ENCODE measurements at regions of chr12 and their contacts with region 1.

Region 1: GRCh38 chr12:109393437-109394345 is 46.0 kb downstream of the MYO1H start:
- DNase-seq: peak; percentile 17
- H3K4me3 Mint-ChIP-seq: no peak overlapping the region
- H3K27ac Mint-ChIP-seq: no peak overlapping the region
- H3K4me1 Mint-ChIP-seq: no peaks in the 10 kb centered on the region
- H3K27me3 Mint-ChIP-seq: peaks cover 2% of the 10 kb centered on the region

Region 2: GRCh38 chr12:109134186-109134917 is 259.3 kb before region 1 on chr12:
- intact Hi-C with region 1: loop called (anchors 1 kb)
- DNase-seq: no peak
- H3K4me3 Mint-ChIP-seq: no peak overlapping the region
- H3K27ac Mint-ChIP-seq: no peak overlapping the region
- H3K4me1 Mint-ChIP-seq: no peaks in the 10 kb centered on the region
- H3K27me3 Mint-ChIP-seq: peaks cover 8% of the 10 kb centered on the region

Region 3: DNA sequence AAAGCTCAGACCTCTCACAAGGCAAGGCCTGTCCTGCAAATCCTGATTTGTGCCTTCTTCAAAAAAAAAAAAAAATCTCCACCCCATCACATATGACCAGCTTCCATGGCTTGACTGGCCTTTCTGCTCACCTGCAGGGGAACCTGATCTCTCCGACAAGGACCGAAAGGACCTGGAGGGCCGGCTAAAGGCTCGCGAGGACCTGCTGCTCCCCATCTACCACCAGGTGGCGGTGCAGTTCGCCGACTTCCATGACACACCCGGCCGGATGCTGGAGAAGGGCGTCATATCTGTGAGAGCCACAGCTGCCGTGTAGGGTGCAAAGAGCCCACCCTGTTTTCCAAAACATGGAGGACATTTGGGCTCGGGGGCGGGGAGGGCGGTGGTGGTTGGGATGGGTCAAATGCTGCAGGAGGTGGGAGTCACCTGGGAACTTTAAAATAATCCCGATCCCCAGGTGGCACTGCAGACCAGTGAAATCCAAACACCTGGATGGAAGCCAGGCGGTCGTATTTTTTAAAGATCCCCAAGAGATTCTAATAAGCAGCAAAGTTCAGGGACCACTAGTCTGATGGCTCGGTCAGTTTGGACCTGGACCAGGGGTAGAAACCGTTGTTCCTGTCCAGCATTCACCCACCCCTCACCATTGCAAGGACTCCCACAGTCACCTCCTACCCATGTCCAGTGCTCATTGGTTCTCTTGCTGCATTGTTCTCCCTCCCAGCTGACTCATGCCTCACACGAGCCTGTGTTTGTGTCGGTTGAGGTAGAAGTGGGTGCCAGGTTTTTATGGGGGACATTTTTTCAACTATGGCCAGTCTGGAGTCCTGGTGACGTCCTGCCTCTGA is 129.4 kb before region 1 on chr12:
- intact Hi-C with region 1: loop called (anchors 2 kb)
- DNase-seq: peak; percentile 19
- H3K4me3 Mint-ChIP-seq: no peak overlapping the region
- H3K27ac Mint-ChIP-seq: no peak overlapping the region
- H3K4me1 Mint-ChIP-seq: no peaks in the 10 kb centered on the region
- H3K27me3 Mint-ChIP-seq: no peaks in the 10 kb centered on the region

Region 4: DNA sequence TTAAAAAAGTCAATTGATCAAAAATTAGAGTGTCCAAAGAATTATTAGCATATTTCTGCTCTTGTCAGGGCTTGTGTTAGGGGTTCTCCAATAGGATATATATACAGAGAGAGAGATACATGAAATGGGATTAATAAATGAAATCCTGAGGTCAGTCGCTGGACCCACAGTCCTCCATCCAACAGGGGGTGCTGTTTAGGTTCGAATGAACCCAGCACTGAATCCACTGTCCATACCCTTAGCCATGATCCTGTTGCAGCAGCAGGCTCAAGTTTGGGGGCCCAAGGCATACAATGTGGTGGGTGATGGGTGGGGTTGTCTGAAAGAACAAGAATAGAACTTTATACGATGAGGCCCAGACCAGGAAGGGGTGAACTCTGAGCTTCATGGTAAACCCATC is 46.8 kb before region 1 on chr12:
- intact Hi-C with region 1: no loop called
- DNase-seq: no peak
- H3K4me3 Mint-ChIP-seq: no peak overlapping the region
- H3K27ac Mint-ChIP-seq: no peak overlapping the region
- H3K4me1 Mint-ChIP-seq: no peaks in the 10 kb centered on the region
- H3K27me3 Mint-ChIP-seq: peaks cover 21% of the 10 kb centered on the region